ENCODE measurements at regions of chr1 and their contacts with region 1.

Region 1: GRCh38 chr1:226407497-226408284 is at the start of gene PARP1:
- DNase-seq: peak; percentile 82
- ATAC-seq: peak; percentile 71
- H3K4me3 Mint-ChIP-seq: peak within 1 kb of the TSS; percentile 99
- H3K27ac Mint-ChIP-seq: peak within 1 kb of the TSS; percentile 99
- H3K4me1 Mint-ChIP-seq: peaks cover 43% of the 10 kb centered on the region
- H3K27me3 Mint-ChIP-seq: no peaks in the 10 kb centered on the region
- CTCF ChIP-seq: peak; percentile 86
- total RNA-seq, gene PARP1: 366 to 376 TPM (median 371 TPM) in 3 replicates

Region 2: DNA sequence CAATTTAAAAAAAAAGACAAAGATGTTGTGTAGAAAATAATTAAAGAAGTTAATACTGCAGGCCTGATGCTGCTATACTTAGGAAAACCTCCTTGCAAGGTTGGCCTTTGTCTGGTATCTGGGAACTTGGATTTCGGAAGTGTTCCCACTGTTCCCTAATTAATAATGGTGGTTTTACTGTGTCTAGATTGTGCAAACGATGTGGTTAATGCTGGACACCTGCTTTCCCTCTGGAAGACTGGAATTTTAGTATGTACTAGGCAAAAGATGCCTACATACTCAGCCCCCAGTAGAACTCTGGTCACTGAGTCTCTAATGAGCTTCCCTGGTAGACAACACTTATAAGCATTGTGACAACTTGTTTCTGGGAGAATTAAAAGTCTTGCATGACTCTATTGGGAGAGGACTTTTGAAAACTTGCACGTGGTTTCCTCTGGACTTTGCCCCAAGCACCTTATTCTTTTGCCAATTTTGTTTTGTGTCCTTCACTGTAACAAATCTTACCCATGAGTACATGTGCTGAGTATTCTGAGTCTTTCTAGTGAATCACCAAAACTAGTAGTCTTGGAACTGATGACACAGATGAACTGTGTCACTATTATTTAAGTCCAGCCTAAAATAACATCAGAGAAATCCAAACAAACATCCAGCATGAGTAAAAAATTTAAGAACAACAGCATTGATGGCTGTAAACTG is 139.1 kb before region 1 on chr1:
- CTCF ChIA-PET with region 1: no interaction called
- POLR2A ChIA-PET with region 1: no interaction called
- DNase-seq: no peak
- ATAC-seq: no peak
- H3K4me3 Mint-ChIP-seq: no peak overlapping the region
- H3K27ac Mint-ChIP-seq: peak overlapping the region; percentile 16; the same call in 1 of the 2 replicates
- H3K4me1 Mint-ChIP-seq: no peaks in the 10 kb centered on the region
- H3K27me3 Mint-ChIP-seq: no peaks in the 10 kb centered on the region
- CTCF ChIP-seq: no peak

Region 3: GRCh38 chr1:226417830-226418546 is 10.3 kb after region 1 on chr1:
- CTCF ChIA-PET with region 1: interaction called, 32 read pairs
- POLR2A ChIA-PET with region 1: no interaction called
- DNase-seq: no peak
- ATAC-seq: peak; percentile 76
- H3K4me3 Mint-ChIP-seq: no peak overlapping the region
- H3K27ac Mint-ChIP-seq: no peak overlapping the region; the same call in 1 of the 2 replicates
- H3K4me1 Mint-ChIP-seq: peaks cover 19% of the 10 kb centered on the region
- H3K27me3 Mint-ChIP-seq: no peaks in the 10 kb centered on the region; the same call in 1 of the 2 replicates
- CTCF ChIP-seq: no peak

Region 4: DNA sequence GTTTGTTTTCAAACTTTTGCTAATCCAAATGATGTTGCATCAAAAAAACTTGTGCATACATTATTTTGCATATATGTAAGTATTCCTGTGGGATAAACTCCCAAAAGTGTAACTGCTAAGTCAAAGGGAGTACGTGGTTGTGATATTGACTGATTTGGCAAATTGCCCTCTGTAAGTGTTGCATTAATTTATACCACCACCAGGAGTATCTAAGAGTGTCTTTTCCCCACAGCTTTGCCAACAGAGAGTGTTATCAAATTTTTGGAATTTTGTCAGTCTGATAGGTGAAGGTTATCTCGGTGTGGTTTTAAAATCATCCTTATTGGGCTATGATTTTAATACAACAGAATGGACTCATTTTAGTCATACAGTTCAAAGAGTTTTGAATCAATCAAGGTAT is 30.3 kb after region 1 on chr1:
- CTCF ChIA-PET with region 1: interaction called, 14 read pairs
- POLR2A ChIA-PET with region 1: interaction called, 5 read pairs
- DNase-seq: no peak
- ATAC-seq: 0 out of 2 replicates have a peak, but pooled peaks have one; percentile 55
- H3K4me3 Mint-ChIP-seq: no peak overlapping the region
- H3K27ac Mint-ChIP-seq: no peak overlapping the region
- H3K4me1 Mint-ChIP-seq: peaks cover 12% of the 10 kb centered on the region
- H3K27me3 Mint-ChIP-seq: 0 out of 2 replicates have a peak, but pooled peaks cover 4% of the 10 kb centered on the region
- CTCF ChIP-seq: no peak

Region 5: DNA sequence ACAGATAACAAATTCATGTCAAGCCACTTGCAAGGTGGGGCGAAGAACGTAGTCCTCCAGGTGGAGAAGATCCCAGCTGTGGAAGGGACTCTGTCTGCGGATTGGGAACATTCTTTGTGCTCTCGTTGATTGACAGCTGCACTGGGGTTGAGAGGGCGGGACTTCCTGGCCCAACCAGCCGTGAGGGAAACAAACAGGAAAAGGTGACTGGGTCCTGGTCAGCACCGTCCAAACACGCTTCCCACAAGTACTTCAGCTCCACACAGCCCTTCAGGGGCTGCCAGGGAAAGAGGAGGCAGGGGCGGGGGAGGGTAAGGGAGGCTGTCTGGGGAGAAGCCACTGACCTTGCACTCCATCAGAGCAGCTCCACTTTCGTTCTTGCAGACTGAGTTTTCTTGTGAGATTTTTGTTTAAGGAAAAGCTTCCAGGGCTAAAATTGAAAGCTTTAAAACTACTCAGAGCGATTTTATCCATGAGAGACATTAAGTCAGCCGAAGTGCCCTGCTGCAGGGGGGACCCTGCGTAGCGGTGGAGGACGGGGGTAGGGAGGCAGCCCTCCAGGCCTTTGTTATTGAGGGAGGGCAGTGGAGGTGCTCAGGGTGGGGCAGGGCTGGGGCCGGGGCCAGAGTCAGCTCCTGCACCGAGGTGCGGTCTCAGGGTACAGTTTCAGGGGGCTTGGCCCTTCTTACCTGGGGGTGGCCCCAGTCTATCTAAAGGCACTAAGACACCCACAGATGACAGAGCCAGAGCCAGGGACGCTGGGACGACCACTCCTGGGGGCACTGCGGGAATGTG is 119.3 kb after region 1 on chr1:
- CTCF ChIA-PET with region 1: interaction called, 17 read pairs
- POLR2A ChIA-PET with region 1: no interaction called
- DNase-seq: peak; percentile 71
- ATAC-seq: peak; percentile 98
- H3K4me3 Mint-ChIP-seq: no peak overlapping the region
- H3K27ac Mint-ChIP-seq: no peak overlapping the region
- H3K4me1 Mint-ChIP-seq: peaks cover 14% of the 10 kb centered on the region
- H3K27me3 Mint-ChIP-seq: peaks cover 20% of the 10 kb centered on the region
- CTCF ChIP-seq: no peak

Region 6: DNA sequence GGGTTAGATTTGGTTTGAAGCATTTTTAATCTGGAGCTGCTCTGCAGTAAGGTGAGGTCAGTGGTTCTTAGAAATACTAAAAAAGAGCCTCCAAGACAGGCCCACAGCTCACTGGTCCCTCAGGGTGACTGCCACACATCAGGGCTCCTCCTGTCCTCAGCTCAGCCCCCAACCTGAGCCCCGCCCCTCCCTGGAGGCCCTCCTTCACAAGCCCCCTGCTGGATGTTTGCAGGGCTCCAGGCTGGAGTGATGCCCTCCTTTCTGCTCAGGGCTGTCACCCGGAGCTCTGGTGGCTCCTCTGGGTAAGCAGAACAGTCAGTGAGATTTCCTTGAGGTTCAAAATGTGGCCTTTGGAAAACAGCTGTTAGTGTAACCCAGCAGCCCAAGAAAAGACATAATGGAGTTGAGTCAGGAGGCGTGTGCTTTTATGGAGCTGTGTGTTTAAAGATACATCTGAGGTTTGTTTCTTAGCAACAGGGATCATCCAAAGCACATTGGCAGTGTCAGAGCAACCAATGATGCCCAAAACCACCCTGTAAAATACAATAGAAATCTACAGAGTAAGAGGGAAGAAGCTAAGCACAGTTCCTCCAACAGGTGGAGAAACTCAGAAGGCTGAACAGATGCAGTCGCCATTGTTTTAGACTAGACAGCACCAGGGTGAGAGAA is 162.3 kb after region 1 on chr1:
- CTCF ChIA-PET with region 1: interaction called, 15 read pairs
- POLR2A ChIA-PET with region 1: no interaction called
- DNase-seq: peak; percentile 77
- ATAC-seq: peak; percentile 94
- H3K4me3 Mint-ChIP-seq: no peak overlapping the region
- H3K27ac Mint-ChIP-seq: no peak overlapping the region
- H3K4me1 Mint-ChIP-seq: peaks cover 13% of the 10 kb centered on the region
- H3K27me3 Mint-ChIP-seq: no peaks in the 10 kb centered on the region; the same call in 1 of the 2 replicates
- CTCF ChIP-seq: no peak